Heart right ventricle (tissue), 16 donors: ENCODE measurements at regions of chr9 and their contacts with region 1.

Region 1: GRCh38 chr9:21395778-21396717 is 10.8 kb upstream of the IFNA2 start:
- DNase-seq: peak; percentile 29 to 57
- ATAC-seq: peak; percentile 43 to 81 (median 71)
- H3K4me3 ChIP-seq: peak overlapping the region in 9 of 10 donors; percentile 33 to 62 (median 55)
- H3K27ac ChIP-seq: no peak overlapping the region
- H3K4me1 ChIP-seq: peaks cover 0 to 11% (median 5%) of the 10 kb centered on the region in 9 donors
- H3K27me3 ChIP-seq: peaks cover 0 to 98% (median 79%) of the 10 kb centered on the region in 7 donors
- CTCF ChIP-seq: peak; percentile 40 to 90 (median 81)

Region 2: DNA sequence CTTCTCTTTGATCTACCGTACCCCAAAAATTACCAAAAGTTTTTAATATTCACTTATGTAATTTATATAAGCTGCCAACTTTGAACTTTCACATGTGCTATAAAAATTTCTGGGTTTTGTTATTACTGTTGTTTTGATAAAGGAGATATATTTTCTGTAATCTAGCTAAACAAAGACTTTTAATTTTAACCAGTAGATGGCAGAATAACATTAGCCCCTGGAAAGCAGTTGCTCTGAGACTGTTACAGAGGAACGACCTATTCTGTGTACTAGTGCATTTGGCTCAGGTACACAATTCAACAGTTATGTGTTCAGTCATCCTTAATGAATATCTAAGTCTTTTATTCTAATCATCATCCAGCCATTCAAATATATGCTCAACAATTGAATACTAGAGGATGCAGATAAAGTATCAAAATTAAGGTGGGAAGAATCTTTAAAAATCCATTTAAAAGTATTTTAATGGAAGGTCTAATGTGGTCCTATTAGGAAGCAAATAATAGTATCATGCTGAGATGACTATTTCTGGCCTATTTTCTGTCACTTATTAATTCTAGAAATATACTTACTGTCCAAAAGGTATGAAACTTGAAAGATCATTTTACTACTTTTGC is 69.4 kb before region 1 on chr9:
- intact Hi-C with region 1: loop called in 9 of 10 experiments (anchors 2 to 5 kb)
- DNase-seq: no peak
- ATAC-seq: peak in 7 of 8 donors; percentile 52 to 78 (median 72)
- H3K4me3 ChIP-seq: no peak overlapping the region
- H3K27ac ChIP-seq: no peak overlapping the region
- H3K4me1 ChIP-seq: peaks cover 0 to 53% (median 37%) of the 10 kb centered on the region in 9 donors
- H3K27me3 ChIP-seq: no peaks in the 10 kb centered on the region
- CTCF ChIP-seq: peak; percentile 33 to 88 (median 74)

Region 3: DNA sequence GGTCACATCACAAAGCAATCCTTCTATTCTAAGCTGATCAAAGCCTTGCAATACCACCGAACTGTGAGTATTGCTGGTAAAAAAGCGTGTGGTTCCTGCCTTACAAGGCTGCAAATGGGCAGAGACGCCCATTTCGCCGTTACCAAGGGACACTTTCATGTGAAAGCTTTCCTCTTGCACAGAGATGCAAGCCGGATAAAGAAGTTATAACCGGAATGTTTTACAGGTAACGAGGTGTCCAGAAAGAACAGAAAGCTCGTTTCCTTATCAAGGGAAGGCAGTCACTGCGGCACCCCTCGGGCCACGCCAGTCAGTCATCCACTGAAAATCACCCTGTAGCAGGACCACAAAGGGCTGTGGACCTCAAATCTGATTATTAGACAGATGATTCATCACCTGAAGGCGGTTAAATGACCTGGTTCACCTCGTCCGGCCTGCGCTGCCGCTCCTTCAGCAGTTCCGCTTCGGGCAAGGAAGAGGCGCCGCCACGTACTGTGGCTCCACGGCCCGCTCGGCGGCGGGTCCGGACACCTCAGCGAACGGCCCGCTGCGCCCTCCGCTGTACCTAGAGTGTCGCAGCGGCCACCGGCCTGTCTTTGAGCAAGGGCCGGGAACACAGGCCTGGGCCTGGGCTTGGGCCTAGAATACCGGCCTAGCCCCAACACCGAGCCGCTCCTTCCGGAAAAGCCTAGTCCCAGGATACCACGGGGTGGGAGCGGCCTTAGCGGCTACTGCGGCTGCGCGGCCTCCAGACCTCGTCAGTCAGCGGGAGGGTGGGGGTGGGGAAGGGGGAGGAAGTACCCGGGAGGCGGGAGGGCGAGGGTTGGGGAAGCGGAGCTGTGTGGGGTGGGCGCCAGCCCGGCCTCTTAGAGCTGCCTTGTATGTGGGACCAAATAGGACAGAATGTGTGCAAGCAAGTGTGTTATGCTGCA is 61.1 kb before region 1 on chr9 and contains the start of gene KLHL9:
- intact Hi-C with region 1: loop called in 1 of 10 experiments (anchors 5 kb)
- DNase-seq: peak; percentile 94 to 95
- ATAC-seq: peak; percentile 99 to 100 (median 100)
- H3K4me3 ChIP-seq: peak within 1 kb of the TSS; percentile 77 to 96 (median 84)
- H3K27ac ChIP-seq: peak within 1 kb of the TSS; percentile 63 to 99 (median 95)
- H3K4me1 ChIP-seq: peaks cover 6 to 51% (median 45%) of the 10 kb centered on the region in 9 donors
- H3K27me3 ChIP-seq: no peaks in the 10 kb centered on the region
- CTCF ChIP-seq: no peak
- total RNA-seq, gene KLHL9: 10.8 to 14.3 (median 11.9) TPM

Region 4: DNA sequence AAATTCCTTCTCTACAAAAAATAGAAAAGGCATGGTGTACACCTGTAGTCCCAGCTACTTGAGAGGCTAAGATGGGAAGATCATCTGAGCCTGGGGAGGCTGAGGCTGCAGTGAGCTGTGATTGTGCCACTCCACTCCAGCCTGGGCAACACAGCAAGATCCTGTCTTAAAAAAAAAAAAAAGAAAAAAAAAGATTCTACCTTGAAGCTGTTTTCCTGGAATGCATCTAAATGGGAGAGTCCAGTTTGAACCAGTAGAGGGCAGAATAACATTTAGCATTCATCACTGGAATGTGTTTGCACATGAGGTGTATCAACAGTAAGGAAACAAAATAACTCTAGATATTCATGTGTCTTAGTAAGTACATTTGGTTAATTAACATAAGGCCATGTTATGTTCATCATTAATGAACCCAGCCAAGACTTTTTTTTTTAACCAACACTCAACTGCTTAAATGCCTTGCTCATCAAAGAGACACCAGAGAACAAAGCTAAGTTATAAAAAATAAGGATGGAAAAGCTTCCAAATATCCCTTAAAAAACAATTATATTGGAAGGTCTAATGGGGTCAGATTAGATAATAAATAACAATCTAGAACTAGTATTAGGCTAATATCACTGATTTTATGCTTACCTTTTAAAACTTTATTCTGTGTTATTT is 69.9 kb after region 1 on chr9:
- intact Hi-C with region 1: no loop called
- DNase-seq: no peak
- ATAC-seq: no peak
- H3K4me3 ChIP-seq: no peak overlapping the region
- H3K27ac ChIP-seq: no peak overlapping the region
- H3K4me1 ChIP-seq: no peaks in the 10 kb centered on the region
- H3K27me3 ChIP-seq: peaks cover 0 to 12% (median 0%) of the 10 kb centered on the region in 7 donors
- CTCF ChIP-seq: peak in 7 of 9 donors; percentile 37 to 66 (median 54)